ENCODE measurements at regions of chr12 and their contacts with region 1.

Region 1: DNA sequence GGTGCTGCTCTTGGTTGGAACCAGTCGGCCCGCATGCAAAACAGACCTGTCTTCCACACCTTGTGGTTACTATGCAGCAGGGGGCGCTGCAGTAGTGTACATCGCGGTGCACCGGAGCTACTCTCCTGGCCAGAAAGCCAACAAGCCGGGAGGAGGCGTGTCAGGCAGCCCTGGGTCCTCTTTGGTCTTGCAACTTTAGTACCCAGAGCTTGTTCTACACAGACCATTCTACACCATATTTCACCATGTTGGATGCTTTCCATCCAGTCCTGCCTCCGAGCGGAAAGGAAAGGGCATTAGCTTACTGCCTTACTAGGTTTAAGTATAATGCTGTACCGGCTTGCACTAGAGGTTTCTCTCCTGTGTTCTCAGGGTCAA is 927 bp upstream of the TMTC2 start:
- DNase-seq: peak; percentile 78 to 85
- ATAC-seq: peak; percentile 67 to 77
- H3K4me3 ChIP-seq: peak overlapping the region; percentile 67 to 89 (median 84)
- H3K27ac ChIP-seq: peak overlapping the region; percentile 72 to 91 (median 80)
- H3K4me1 ChIP-seq: peaks cover 3 to 11% of the 10 kb centered on the region in 2 donors
- H3K27me3 ChIP-seq: peaks cover 3 to 21% (median 11%) of the 10 kb centered on the region in 3 donors
- CTCF ChIP-seq: peak; percentile 56 to 84 (median 74)
- POLR2A ChIP-seq: no peak

Region 2: DNA sequence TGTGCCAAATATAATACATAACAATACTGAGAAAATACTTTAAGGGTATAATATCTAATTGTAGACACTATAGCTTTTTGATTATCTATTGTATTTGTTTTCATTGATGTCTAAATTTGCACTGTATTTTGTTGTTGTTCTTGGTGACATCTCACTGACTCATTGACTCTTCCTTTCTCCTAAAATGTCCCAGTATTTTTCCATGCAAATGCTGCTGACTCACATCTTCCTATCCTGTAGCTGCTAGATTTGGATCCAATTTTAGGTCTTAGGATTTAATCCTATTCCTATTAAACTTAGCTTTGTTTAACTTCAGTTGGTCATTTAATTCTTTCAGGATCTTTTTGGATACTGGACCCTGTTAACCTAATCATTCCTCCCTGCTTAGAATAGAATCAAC is 149.4 kb after region 1 on chr12:
- in situ Hi-C with region 1: no loop called
- intact Hi-C with region 1: no loop called
- DNase-seq: no peak
- ATAC-seq: no peak
- H3K4me3 ChIP-seq: no peak overlapping the region
- H3K27ac ChIP-seq: no peak overlapping the region
- H3K4me1 ChIP-seq: no peaks in the 10 kb centered on the region
- H3K27me3 ChIP-seq: no peaks in the 10 kb centered on the region
- CTCF ChIP-seq: no peak
- POLR2A ChIP-seq: no peak

Region 3: GRCh38 chr12:84502907-84503787 is 1817.4 kb after region 1 on chr12:
- in situ Hi-C with region 1: no loop called
- intact Hi-C with region 1: loop called (anchors 10 kb)
- DNase-seq: no peak
- ATAC-seq: no peak
- H3K4me3 ChIP-seq: no peak overlapping the region
- H3K27ac ChIP-seq: no peak overlapping the region
- H3K4me1 ChIP-seq: no peaks in the 10 kb centered on the region
- H3K27me3 ChIP-seq: no peaks in the 10 kb centered on the region
- CTCF ChIP-seq: peak in 1 of 5 experiments; percentile 10
- POLR2A ChIP-seq: no peak